Endothelial cell of umbilical vein (primary cell): ENCODE measurements at regions of chr12 and their contacts with region 1.

Region 1: GRCh38 chr12:11719678-11720099 is 70.2 kb downstream of the ETV6 start:
- DNase-seq: peak; percentile 94
- H3K4me3 ChIP-seq: no peak overlapping the region
- H3K27ac ChIP-seq: peak overlapping the region; percentile 95
- H3K4me1 ChIP-seq: peaks cover 60% of the 10 kb centered on the region
- H3K27me3 ChIP-seq: no peaks in the 10 kb centered on the region
- CTCF ChIP-seq: no peak
- POLR2A ChIP-seq: peak; percentile 21

Region 2: DNA sequence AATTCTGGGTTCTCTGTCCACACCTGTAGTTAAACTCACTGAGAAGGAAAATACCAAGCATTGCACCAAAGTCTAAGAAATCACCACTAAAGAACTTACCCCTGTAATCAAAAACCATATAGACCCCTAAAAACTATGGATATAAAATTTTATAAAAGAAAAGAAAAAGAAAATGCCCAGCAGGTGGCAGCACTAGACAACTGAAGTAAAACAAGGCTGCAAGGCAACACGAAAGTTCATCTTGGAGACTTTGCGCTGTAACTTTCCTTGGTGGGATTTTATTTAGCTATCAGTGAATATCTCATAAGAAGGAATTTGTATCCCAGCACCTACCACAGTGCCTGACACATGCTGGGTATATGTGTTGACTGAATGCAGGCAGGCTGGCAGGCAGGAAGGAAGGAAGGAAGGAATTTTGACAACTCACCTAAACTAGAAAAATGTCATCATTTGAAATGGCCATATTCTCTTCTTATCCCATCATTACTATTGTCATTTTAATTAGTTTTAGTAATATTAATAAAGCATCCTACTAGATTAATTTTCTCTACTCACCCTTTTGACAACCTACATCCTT is 138.4 kb before region 1 on chr12:
- CTCF ChIA-PET with region 1: interaction called, 4 read pairs
- POLR2A ChIA-PET with region 1: no interaction called
- dilution Hi-C with region 1: no loop called
- intact Hi-C with region 1: loop called (anchors 5 kb)
- DNase-seq: peak; percentile 65
- H3K4me3 ChIP-seq: no peak overlapping the region
- H3K27ac ChIP-seq: no peak overlapping the region
- H3K4me1 ChIP-seq: peaks cover 8% of the 10 kb centered on the region
- H3K27me3 ChIP-seq: no peaks in the 10 kb centered on the region
- CTCF ChIP-seq: peak in 1 of 2 donors; percentile 16
- POLR2A ChIP-seq: no peak

Region 3: DNA sequence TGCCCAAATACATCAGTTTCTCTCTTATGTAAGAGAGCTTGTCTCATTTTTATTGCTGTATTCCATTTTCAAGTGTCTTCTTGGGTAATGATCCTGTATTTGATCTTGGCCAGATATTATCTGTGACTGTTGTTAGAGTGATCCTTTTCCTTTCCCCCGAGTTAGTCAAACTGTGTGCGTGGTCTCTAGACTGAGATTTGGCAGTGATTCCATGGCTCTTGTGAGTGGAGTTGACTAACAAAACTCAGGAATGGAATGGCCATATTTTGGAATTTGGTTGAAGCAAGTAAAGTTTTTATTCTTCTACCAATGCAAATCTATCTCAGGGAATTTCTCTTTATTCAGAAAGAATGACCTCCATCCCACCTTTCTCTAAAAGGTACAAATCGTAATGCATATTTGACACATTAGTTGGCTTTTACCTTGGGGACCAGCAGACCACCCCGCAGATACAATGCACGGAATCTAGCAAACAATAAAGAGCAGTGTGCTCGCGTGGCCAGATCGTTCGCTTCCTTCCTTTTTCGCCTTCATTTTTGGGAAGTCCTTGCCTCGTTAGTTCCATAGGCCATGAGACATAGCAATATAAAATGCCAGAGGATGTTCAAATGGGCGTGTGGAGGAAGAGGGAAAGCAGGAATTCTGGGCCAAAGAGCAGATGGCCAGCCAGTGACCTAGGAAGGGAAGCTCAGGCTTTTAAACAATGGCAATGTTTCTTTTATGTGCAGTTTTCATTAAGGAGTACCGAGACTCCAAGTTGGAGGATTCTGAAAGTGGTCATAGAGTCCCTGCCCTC is 45.8 kb before region 1 on chr12:
- CTCF ChIA-PET with region 1: interaction called, 3 read pairs
- POLR2A ChIA-PET with region 1: no interaction called
- dilution Hi-C with region 1: no loop called
- intact Hi-C with region 1: loop called (anchors 2 kb)
- DNase-seq: peak; percentile 76
- H3K4me3 ChIP-seq: peak overlapping the region in 1 of 3 experiments; percentile 18
- H3K27ac ChIP-seq: peak overlapping the region; percentile 55
- H3K4me1 ChIP-seq: peaks cover 37% of the 10 kb centered on the region
- H3K27me3 ChIP-seq: no peaks in the 10 kb centered on the region
- CTCF ChIP-seq: no peak
- POLR2A ChIP-seq: no peak

Region 4: DNA sequence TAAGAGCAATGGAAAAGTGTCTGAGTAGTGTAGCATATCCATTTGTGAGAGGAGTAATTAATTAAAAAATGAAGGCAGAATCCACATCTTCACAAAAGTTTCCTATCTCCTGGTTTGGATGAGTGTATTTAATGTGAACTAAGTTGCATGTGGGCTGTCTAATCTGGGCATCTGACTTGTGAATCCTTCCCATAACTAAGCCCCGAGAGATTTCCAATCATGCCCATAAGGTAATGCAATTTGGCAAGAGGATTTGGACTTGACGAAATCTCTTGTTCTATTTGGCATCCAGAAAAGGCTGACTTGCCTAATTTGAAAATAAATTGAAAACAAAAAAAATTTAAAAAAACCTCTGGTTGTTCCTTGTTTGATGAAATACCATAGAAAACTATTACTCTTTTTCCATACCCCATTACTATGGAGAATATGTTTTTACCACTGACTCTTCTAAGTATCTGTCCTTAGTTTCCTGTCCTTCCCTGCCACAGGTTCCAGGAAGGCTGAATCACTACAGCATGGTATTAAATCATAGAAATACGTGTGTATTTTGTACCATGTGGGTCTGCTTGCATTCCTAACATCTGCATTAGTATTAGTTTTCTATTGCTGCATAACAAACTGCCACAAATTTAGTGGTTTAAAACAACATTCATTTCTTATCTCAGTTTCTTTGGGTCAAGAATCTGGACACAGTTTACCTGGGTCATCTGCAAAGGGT is 21.9 kb before region 1 on chr12:
- CTCF ChIA-PET with region 1: no interaction called
- POLR2A ChIA-PET with region 1: no interaction called
- dilution Hi-C with region 1: no loop called
- intact Hi-C with region 1: no loop called
- DNase-seq: peak; percentile 67
- H3K4me3 ChIP-seq: no peak overlapping the region
- H3K27ac ChIP-seq: peak overlapping the region; percentile 39
- H3K4me1 ChIP-seq: peaks cover 24% of the 10 kb centered on the region
- H3K27me3 ChIP-seq: no peaks in the 10 kb centered on the region
- CTCF ChIP-seq: no peak
- POLR2A ChIP-seq: no peak

Region 5: GRCh38 chr12:11730299-11731041 is 10.8 kb after region 1 on chr12:
- CTCF ChIA-PET with region 1: interaction called, 6 read pairs
- POLR2A ChIA-PET with region 1: no interaction called
- dilution Hi-C with region 1: no loop called
- intact Hi-C with region 1: loop called (anchors 1 kb)
- DNase-seq: no peak
- H3K4me3 ChIP-seq: no peak overlapping the region
- H3K27ac ChIP-seq: peak overlapping the region; percentile 91
- H3K4me1 ChIP-seq: peaks cover 43% of the 10 kb centered on the region
- H3K27me3 ChIP-seq: no peaks in the 10 kb centered on the region
- CTCF ChIP-seq: no peak
- POLR2A ChIP-seq: no peak

Region 6: GRCh38 chr12:11812586-11813427 is 93.1 kb after region 1 on chr12:
- CTCF ChIA-PET with region 1: interaction called, 7 read pairs
- POLR2A ChIA-PET with region 1: interaction called, 3 read pairs
- dilution Hi-C with region 1: no loop called
- intact Hi-C with region 1: loop called (anchors 5 kb)
- DNase-seq: peak; percentile 59
- H3K4me3 ChIP-seq: peak overlapping the region in 1 of 3 experiments; percentile 29
- H3K27ac ChIP-seq: peak overlapping the region; percentile 77
- H3K4me1 ChIP-seq: peaks cover 35% of the 10 kb centered on the region
- H3K27me3 ChIP-seq: no peaks in the 10 kb centered on the region
- CTCF ChIP-seq: peak in 1 of 2 donors; percentile 40
- POLR2A ChIP-seq: peak; percentile 46

Region 7: GRCh38 chr12:11862798-11863197 is 143.1 kb after region 1 on chr12:
- CTCF ChIA-PET with region 1: no interaction called
- POLR2A ChIA-PET with region 1: no interaction called
- dilution Hi-C with region 1: no loop called
- intact Hi-C with region 1: loop called (anchors 5 kb)
- DNase-seq: peak; percentile 69
- H3K4me3 ChIP-seq: no peak overlapping the region
- H3K27ac ChIP-seq: peak overlapping the region; percentile 98
- H3K4me1 ChIP-seq: peaks cover 42% of the 10 kb centered on the region
- H3K27me3 ChIP-seq: no peaks in the 10 kb centered on the region
- CTCF ChIP-seq: no peak
- POLR2A ChIP-seq: no peak

Region 8: DNA sequence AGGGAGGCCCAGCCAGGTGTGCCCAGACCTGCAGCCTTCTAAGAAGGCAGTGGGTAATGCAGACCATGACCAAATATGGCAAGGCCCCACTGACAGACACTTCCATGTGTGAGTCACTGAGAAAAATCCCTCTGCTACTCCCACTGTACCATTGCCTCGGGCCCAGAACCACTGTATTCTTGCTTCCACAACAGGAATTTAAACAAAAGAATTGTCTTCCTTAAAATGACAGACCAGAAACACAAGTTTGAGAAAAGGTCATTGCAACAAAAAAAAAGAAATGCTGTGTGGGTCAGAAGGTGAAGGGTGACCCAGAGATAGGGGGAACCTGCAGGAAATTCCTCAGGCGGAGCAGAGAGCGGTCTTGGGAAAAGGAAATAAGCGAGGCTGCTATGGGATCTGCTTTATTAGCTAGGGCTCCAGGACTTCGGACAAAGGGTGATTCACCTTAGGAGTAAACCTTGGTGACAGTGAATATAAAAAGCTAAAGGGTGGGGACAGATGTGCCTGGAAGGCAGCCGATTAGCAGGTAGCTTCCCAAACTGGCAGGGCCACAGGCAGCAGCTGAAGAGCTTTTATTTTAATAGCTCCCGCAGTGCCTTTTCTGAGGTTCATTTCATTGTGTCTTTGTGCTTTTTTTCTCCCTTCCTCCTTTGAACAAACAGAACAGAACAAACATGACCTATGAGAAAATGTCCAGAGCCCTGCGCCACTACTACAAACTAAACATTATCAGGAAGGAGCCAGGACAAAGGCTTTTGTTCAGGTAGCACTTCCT is 165.8 kb after region 1 on chr12:
- CTCF ChIA-PET with region 1: no interaction called
- POLR2A ChIA-PET with region 1: no interaction called
- dilution Hi-C with region 1: no loop called
- intact Hi-C with region 1: loop called (anchors 2 kb)
- DNase-seq: peak; percentile 95
- H3K4me3 ChIP-seq: peak overlapping the region in 1 of 3 experiments; percentile 9
- H3K27ac ChIP-seq: peak overlapping the region; percentile 92
- H3K4me1 ChIP-seq: peaks cover 49% of the 10 kb centered on the region
- H3K27me3 ChIP-seq: no peaks in the 10 kb centered on the region
- CTCF ChIP-seq: no peak
- POLR2A ChIP-seq: peak; percentile 51

Region 9: GRCh38 chr12:11927286-11927935 is 207.7 kb after region 1 on chr12:
- CTCF ChIA-PET with region 1: no interaction called
- POLR2A ChIA-PET with region 1: no interaction called
- dilution Hi-C with region 1: no loop called
- intact Hi-C with region 1: no loop called
- DNase-seq: no peak
- H3K4me3 ChIP-seq: no peak overlapping the region
- H3K27ac ChIP-seq: no peak overlapping the region
- H3K4me1 ChIP-seq: no peaks in the 10 kb centered on the region
- H3K27me3 ChIP-seq: peaks cover 0 to 16% of the 10 kb centered on the region in 2 experiments
- CTCF ChIP-seq: no peak
- POLR2A ChIP-seq: no peak

Region 10: GRCh38 chr12:12039897-12040296 is 320.2 kb after region 1 on chr12:
- CTCF ChIA-PET with region 1: no interaction called
- POLR2A ChIA-PET with region 1: no interaction called
- dilution Hi-C with region 1: no loop called
- intact Hi-C with region 1: no loop called
- DNase-seq: no peak
- H3K4me3 ChIP-seq: no peak overlapping the region
- H3K27ac ChIP-seq: no peak overlapping the region
- H3K4me1 ChIP-seq: no peaks in the 10 kb centered on the region
- H3K27me3 ChIP-seq: peaks cover 4 to 6% of the 10 kb centered on the region in 2 experiments
- CTCF ChIP-seq: no peak
- POLR2A ChIP-seq: no peak